ENCODE measurements at regions of chr3 and their contacts with region 1.

Region 1: GRCh38 chr3:156474560-156475389 is 80.1 kb downstream of the SSR3 start:
- DNase-seq: peak in 2 of 9 experiments; percentile 15 to 23
- ATAC-seq: no peak
- H3K4me3 ChIP-seq: no peak overlapping the region
- H3K4me3 Mint-ChIP-seq: peak overlapping the region; percentile 26
- H3K27ac ChIP-seq: no peak overlapping the region
- H3K27ac Mint-ChIP-seq: no peak overlapping the region
- H3K4me1 ChIP-seq: no peaks in the 10 kb centered on the region
- H3K4me1 Mint-ChIP-seq: peaks cover 3% of the 10 kb centered on the region
- H3K27me3 ChIP-seq: no peaks in the 10 kb centered on the region
- H3K27me3 Mint-ChIP-seq: peaks cover 7% of the 10 kb centered on the region
- CTCF ChIP-seq: peak; percentile 24

Region 2: DNA sequence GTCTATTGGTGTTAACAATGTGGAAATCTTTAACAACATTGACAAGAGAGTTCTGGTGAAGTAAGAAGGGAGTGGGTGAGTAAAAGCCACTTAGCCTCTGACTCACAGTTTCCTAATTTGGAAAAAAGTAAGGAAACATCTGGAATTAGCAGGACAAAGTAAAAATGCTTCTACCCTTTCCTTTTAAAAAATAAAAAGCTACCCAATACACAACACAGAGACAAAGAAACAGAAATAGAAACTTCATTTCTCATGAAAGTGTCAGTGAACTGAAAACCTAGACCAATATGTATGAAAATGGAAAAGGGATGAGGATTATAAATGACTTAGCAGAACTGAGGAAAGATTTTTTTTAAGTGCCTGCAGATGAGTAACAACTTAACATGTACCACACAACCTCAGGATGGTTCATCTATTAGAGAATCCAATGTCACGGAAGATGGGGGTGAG is 14.7 kb after region 1 on chr3:
- CTCF ChIA-PET with region 1: interaction called, 6 read pairs
- POLR2A ChIA-PET with region 1: no interaction called
- intact Hi-C with region 1: loop called in 1 of 2 experiments (anchors 2 kb)
- DNase-seq: no peak
- ATAC-seq: no peak
- H3K4me3 ChIP-seq: no peak overlapping the region
- H3K4me3 Mint-ChIP-seq: no peak overlapping the region
- H3K27ac ChIP-seq: no peak overlapping the region
- H3K27ac Mint-ChIP-seq: no peak overlapping the region
- H3K4me1 ChIP-seq: peaks cover 9% of the 10 kb centered on the region
- H3K4me1 Mint-ChIP-seq: peaks cover 12% of the 10 kb centered on the region
- H3K27me3 ChIP-seq: no peaks in the 10 kb centered on the region
- H3K27me3 Mint-ChIP-seq: peaks cover 5% of the 10 kb centered on the region
- CTCF ChIP-seq: no peak

Region 3: GRCh38 chr3:156536524-156537231 is 61.9 kb after region 1 on chr3:
- CTCF ChIA-PET with region 1: interaction called, 3 read pairs
- POLR2A ChIA-PET with region 1: no interaction called
- intact Hi-C with region 1: loop called in 1 of 2 experiments (anchors 1 kb)
- DNase-seq: no peak
- ATAC-seq: no peak
- H3K4me3 ChIP-seq: no peak overlapping the region
- H3K4me3 Mint-ChIP-seq: no peak overlapping the region
- H3K27ac ChIP-seq: no peak overlapping the region
- H3K27ac Mint-ChIP-seq: no peak overlapping the region
- H3K4me1 ChIP-seq: no peaks in the 10 kb centered on the region
- H3K4me1 Mint-ChIP-seq: no peaks in the 10 kb centered on the region
- H3K27me3 ChIP-seq: no peaks in the 10 kb centered on the region
- H3K27me3 Mint-ChIP-seq: no peaks in the 10 kb centered on the region
- CTCF ChIP-seq: no peak

Region 4: GRCh38 chr3:156792945-156793344 is 318.2 kb after region 1 on chr3:
- CTCF ChIA-PET with region 1: no interaction called
- POLR2A ChIA-PET with region 1: no interaction called
- intact Hi-C with region 1: no loop called
- DNase-seq: peak in 3 of 9 experiments; percentile 5 to 62 (median 34)
- ATAC-seq: peak; percentile 57
- H3K4me3 ChIP-seq: no peak overlapping the region
- H3K4me3 Mint-ChIP-seq: no peak overlapping the region
- H3K27ac ChIP-seq: peak overlapping the region in 1 of 2 experiments; percentile 33
- H3K27ac Mint-ChIP-seq: peak overlapping the region; percentile 67
- H3K4me1 ChIP-seq: peaks cover 7% of the 10 kb centered on the region
- H3K4me1 Mint-ChIP-seq: peaks cover 19% of the 10 kb centered on the region
- H3K27me3 ChIP-seq: no peaks in the 10 kb centered on the region
- H3K27me3 Mint-ChIP-seq: no peaks in the 10 kb centered on the region
- CTCF ChIP-seq: no peak